ENCODE measurements at regions of chr7 and their contacts with region 1.

Region 1: GRCh38 chr7:38962028-38962427 is 15.7 kb upstream of the POU6F2 start:
- DNase-seq: no peak
- H3K4me3 ChIP-seq: no peak overlapping the region
- H3K27ac ChIP-seq: no peak overlapping the region
- H3K4me1 ChIP-seq: no peaks in the 10 kb centered on the region
- H3K27me3 ChIP-seq: no peaks in the 10 kb centered on the region
- CTCF ChIP-seq: no peak

Region 2: GRCh38 chr7:38929460-38930171 is 32.4 kb before region 1 on chr7:
- intact Hi-C with region 1: no loop called
- DNase-seq: no peak
- H3K4me3 ChIP-seq: no peak overlapping the region
- H3K27ac ChIP-seq: no peak overlapping the region
- H3K4me1 ChIP-seq: peaks cover 0 to 7% (median 0%) of the 10 kb centered on the region in 4 donors
- H3K27me3 ChIP-seq: no peaks in the 10 kb centered on the region
- CTCF ChIP-seq: no peak

Region 3: DNA sequence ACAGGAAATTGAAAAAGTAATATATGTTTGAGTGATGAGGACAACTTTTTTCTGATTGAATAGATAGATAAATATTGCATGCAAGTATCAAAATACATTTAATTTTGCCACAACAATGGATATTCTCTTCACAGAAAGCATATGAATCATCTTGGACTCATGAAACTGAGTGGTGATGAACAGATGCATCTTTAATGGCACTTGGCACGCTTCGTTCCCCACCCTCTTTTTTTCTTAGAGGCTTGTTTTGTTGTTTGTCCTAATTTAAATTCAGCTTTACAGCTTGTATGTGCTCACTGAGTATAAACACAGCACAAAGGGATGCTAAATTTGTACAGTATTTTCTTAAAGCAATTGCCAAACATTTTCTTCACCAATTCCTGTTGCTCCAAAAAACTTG is 459.2 kb after region 1 on chr7:
- intact Hi-C with region 1: loop called (anchors 5 kb)
- DNase-seq: no peak
- H3K4me3 ChIP-seq: no peak overlapping the region
- H3K27ac ChIP-seq: no peak overlapping the region
- H3K4me1 ChIP-seq: no peaks in the 10 kb centered on the region
- H3K27me3 ChIP-seq: no peaks in the 10 kb centered on the region
- CTCF ChIP-seq: no peak